ENCODE measurements at regions of chr2 and their contacts with region 1.

Region 1: DNA sequence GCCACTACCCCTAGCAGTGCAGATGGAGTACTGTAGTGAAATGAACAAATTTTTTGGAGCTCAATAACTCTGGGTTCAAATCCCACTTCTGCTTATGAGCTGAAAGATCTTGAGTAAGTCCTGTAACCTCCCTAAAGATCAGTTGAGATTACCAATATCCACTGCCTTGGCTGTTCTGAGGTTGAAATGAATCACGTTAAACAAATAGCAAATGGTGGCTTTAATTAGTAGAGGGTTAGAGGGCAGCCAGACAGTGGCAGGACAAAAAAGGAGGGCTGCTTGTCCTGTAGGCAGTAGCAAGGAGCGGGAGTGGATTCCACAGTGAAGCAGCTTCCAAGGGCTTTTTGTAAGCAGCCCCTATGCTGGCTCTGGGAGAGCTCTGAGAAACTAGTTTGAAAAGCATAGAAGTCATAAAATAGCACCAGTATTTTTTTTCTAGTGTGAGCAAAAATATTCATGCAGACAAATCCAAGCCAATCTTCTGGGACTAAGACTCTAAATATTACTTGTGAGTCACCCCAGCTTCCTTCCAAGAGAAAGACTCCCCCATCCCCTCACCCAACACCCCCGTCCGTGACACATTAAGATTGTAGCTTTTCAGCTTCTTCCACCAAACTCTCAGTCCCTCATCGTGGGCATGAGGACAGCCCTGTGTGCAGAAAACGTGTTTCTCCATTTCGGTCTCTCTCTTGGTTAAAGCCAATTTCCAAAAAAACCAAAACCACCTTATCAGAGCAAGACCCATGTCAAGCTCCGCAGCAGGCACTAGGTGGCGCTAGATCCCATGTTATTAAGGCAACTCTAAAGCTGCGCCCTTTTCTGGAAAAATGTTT is 123.5 kb upstream of the LGALSL start:
- DNase-seq: no peak
- ATAC-seq: peak; percentile 22
- H3K4me3 ChIP-seq: no peak overlapping the region
- H3K27ac ChIP-seq: no peak overlapping the region
- H3K4me1 ChIP-seq: peaks cover 41% of the 10 kb centered on the region
- H3K27me3 ChIP-seq: no peaks in the 10 kb centered on the region
- CTCF ChIP-seq: peak; percentile 82 to 92 (median 91)
- EP300 ChIP-seq: no peak
- POLR2A ChIP-seq: no peak
- RAD21 ChIP-seq: peak; percentile 97

Region 2: GRCh38 chr2:63698825-63699548 is 631.5 kb before region 1 on chr2:
- CTCF ChIA-PET with region 1: interaction called, 8 read pairs
- POLR2A ChIA-PET with region 1: no interaction called
- RAD21 ChIA-PET with region 1: interaction called, 4 read pairs
- SMC1A ChIA-PET with region 1: interaction called, 15 read pairs
- in situ Hi-C with region 1: no loop called
- intact Hi-C with region 1: no loop called
- DNase-seq: no peak
- ATAC-seq: peak; percentile 99
- H3K4me3 ChIP-seq: no peak overlapping the region
- H3K27ac ChIP-seq: no peak overlapping the region
- H3K4me1 ChIP-seq: no peaks in the 10 kb centered on the region
- H3K27me3 ChIP-seq: no peaks in the 10 kb centered on the region
- CTCF ChIP-seq: peak; percentile 55 to 71 (median 67)
- EP300 ChIP-seq: no peak
- POLR2A ChIP-seq: no peak
- RAD21 ChIP-seq: peak; percentile 77

Region 3: DNA sequence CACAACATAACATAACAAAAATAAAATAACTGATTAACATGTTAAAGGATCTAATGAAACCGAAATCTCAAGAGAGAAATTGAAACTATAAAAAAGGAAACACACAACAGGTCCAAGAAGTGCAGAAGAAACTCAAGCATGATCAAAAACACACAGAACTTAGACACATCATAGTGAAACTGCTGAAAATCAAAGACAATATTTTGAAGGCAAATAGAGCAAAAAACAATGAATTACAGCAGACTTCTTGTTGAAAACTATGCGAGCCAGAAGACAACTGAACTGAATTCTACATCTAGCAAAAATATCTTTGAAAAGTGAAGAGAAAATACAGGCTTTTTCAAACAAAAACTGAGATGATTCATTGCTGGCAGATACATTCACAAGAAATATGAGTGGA is 427.5 kb before region 1 on chr2:
- CTCF ChIA-PET with region 1: no interaction called
- POLR2A ChIA-PET with region 1: no interaction called
- RAD21 ChIA-PET with region 1: no interaction called
- SMC1A ChIA-PET with region 1: no interaction called
- in situ Hi-C with region 1: no loop called
- intact Hi-C with region 1: no loop called
- DNase-seq: peak; percentile 35
- ATAC-seq: peak; percentile 65
- H3K4me3 ChIP-seq: no peak overlapping the region
- H3K27ac ChIP-seq: no peak overlapping the region
- H3K4me1 ChIP-seq: no peaks in the 10 kb centered on the region
- H3K27me3 ChIP-seq: no peaks in the 10 kb centered on the region
- CTCF ChIP-seq: no peak
- EP300 ChIP-seq: no peak
- POLR2A ChIP-seq: no peak
- RAD21 ChIP-seq: no peak

Region 4: GRCh38 chr2:64133828-64134227 is 196.7 kb before region 1 on chr2:
- CTCF ChIA-PET with region 1: interaction called, 35 read pairs
- POLR2A ChIA-PET with region 1: interaction called, 5 read pairs
- RAD21 ChIA-PET with region 1: interaction called, 75 read pairs
- SMC1A ChIA-PET with region 1: interaction called, 73 read pairs
- in situ Hi-C with region 1: loop called (anchors 5 kb)
- intact Hi-C with region 1: no loop called
- DNase-seq: no peak
- ATAC-seq: no peak
- H3K4me3 ChIP-seq: no peak overlapping the region
- H3K27ac ChIP-seq: no peak overlapping the region; the same call in 1 of the 2 replicates
- H3K4me1 ChIP-seq: peaks cover 46% of the 10 kb centered on the region
- H3K27me3 ChIP-seq: no peaks in the 10 kb centered on the region
- CTCF ChIP-seq: no peak
- EP300 ChIP-seq: no peak
- POLR2A ChIP-seq: no peak
- RAD21 ChIP-seq: no peak

Region 5: GRCh38 chr2:64222351-64222750 is 108.1 kb before region 1 on chr2:
- CTCF ChIA-PET with region 1: interaction called, 117 read pairs
- POLR2A ChIA-PET with region 1: interaction called, 3 read pairs
- RAD21 ChIA-PET with region 1: interaction called, 186 read pairs
- SMC1A ChIA-PET with region 1: interaction called, 161 read pairs
- in situ Hi-C with region 1: no loop called
- intact Hi-C with region 1: no loop called
- DNase-seq: no peak
- ATAC-seq: no peak
- H3K4me3 ChIP-seq: no peak overlapping the region
- H3K27ac ChIP-seq: no peak overlapping the region; the same call in 1 of the 2 replicates
- H3K4me1 ChIP-seq: peaks cover 14% of the 10 kb centered on the region
- H3K27me3 ChIP-seq: no peaks in the 10 kb centered on the region
- CTCF ChIP-seq: no peak
- EP300 ChIP-seq: no peak
- POLR2A ChIP-seq: no peak
- RAD21 ChIP-seq: no peak

Region 6: GRCh38 chr2:64348386-64349130 is 18.1 kb after region 1 on chr2:
- CTCF ChIA-PET with region 1: interaction called, 53 read pairs
- POLR2A ChIA-PET with region 1: interaction called, 4 read pairs
- RAD21 ChIA-PET with region 1: interaction called, 4 read pairs
- SMC1A ChIA-PET with region 1: interaction called, 9 read pairs
- in situ Hi-C with region 1: no loop called
- intact Hi-C with region 1: no loop called
- DNase-seq: no peak
- ATAC-seq: no peak
- H3K4me3 ChIP-seq: no peak overlapping the region
- H3K27ac ChIP-seq: no peak overlapping the region
- H3K4me1 ChIP-seq: no peaks in the 10 kb centered on the region
- H3K27me3 ChIP-seq: no peaks in the 10 kb centered on the region
- CTCF ChIP-seq: no peak
- EP300 ChIP-seq: no peak
- POLR2A ChIP-seq: no peak
- RAD21 ChIP-seq: no peak

Region 7: GRCh38 chr2:64516628-64517510 is 186.4 kb after region 1 on chr2:
- CTCF ChIA-PET with region 1: interaction called, 21 read pairs
- POLR2A ChIA-PET with region 1: no interaction called
- RAD21 ChIA-PET with region 1: interaction called, 13 read pairs
- SMC1A ChIA-PET with region 1: interaction called, 10 read pairs
- in situ Hi-C with region 1: no loop called
- intact Hi-C with region 1: no loop called
- DNase-seq: no peak
- ATAC-seq: no peak
- H3K4me3 ChIP-seq: no peak overlapping the region
- H3K27ac ChIP-seq: no peak overlapping the region
- H3K4me1 ChIP-seq: no peaks in the 10 kb centered on the region
- H3K27me3 ChIP-seq: peaks cover 0 to 6% of the 10 kb centered on the region in 2 experiments; a peak in 1 of 4 replicates
- CTCF ChIP-seq: no peak
- EP300 ChIP-seq: no peak
- POLR2A ChIP-seq: no peak
- RAD21 ChIP-seq: no peak

Region 8: GRCh38 chr2:64653349-64654062 is 323.0 kb after region 1 on chr2 and contains the start of gene SERTAD2:
- CTCF ChIA-PET with region 1: interaction called, 10 read pairs
- POLR2A ChIA-PET with region 1: no interaction called
- RAD21 ChIA-PET with region 1: interaction called, 14 read pairs
- SMC1A ChIA-PET with region 1: interaction called, 4 read pairs
- in situ Hi-C with region 1: no loop called
- intact Hi-C with region 1: no loop called
- DNase-seq: no peak
- ATAC-seq: peak; percentile 70
- H3K4me3 ChIP-seq: peak within 1 kb of the TSS; percentile 95
- H3K27ac ChIP-seq: peak within 1 kb of the TSS; percentile 81
- H3K4me1 ChIP-seq: peaks cover 51% of the 10 kb centered on the region
- H3K27me3 ChIP-seq: no peaks in the 10 kb centered on the region
- CTCF ChIP-seq: 0 out of 6 replicates have a peak, but pooled peaks of 1 of the 3 experiments have one; percentile 6
- EP300 ChIP-seq: no peak
- POLR2A ChIP-seq: peak; percentile 90
- RAD21 ChIP-seq: 0 out of 2 replicates have a peak, but pooled peaks have one; percentile 19
- polyA plus RNA-seq, gene SERTAD2: 7.9 TPM